CD4-positive, alpha-beta T cell (primary cell): ENCODE measurements at regions of chr3 and their contacts with region 1.

Region 1: GRCh38 chr3:56682462-56683121 is 473 bp downstream of the TASOR start:
- DNase-seq: peak; percentile 65 to 91 (median 74)
- ATAC-seq: peak; percentile 69
- H3K4me3 ChIP-seq: peak overlapping the region; percentile 79
- H3K4me3 Mint-ChIP-seq: peak overlapping the region; percentile 95
- H3K27ac ChIP-seq: peak overlapping the region; percentile 98 to 99
- H3K27ac Mint-ChIP-seq: peak overlapping the region; percentile 99
- H3K4me1 ChIP-seq: peaks cover 20% of the 10 kb centered on the region
- H3K4me1 Mint-ChIP-seq: peaks cover 44% of the 10 kb centered on the region
- H3K27me3 ChIP-seq: no peaks in the 10 kb centered on the region
- H3K27me3 Mint-ChIP-seq: no peaks in the 10 kb centered on the region
- CTCF ChIP-seq: no peak

Region 2: DNA sequence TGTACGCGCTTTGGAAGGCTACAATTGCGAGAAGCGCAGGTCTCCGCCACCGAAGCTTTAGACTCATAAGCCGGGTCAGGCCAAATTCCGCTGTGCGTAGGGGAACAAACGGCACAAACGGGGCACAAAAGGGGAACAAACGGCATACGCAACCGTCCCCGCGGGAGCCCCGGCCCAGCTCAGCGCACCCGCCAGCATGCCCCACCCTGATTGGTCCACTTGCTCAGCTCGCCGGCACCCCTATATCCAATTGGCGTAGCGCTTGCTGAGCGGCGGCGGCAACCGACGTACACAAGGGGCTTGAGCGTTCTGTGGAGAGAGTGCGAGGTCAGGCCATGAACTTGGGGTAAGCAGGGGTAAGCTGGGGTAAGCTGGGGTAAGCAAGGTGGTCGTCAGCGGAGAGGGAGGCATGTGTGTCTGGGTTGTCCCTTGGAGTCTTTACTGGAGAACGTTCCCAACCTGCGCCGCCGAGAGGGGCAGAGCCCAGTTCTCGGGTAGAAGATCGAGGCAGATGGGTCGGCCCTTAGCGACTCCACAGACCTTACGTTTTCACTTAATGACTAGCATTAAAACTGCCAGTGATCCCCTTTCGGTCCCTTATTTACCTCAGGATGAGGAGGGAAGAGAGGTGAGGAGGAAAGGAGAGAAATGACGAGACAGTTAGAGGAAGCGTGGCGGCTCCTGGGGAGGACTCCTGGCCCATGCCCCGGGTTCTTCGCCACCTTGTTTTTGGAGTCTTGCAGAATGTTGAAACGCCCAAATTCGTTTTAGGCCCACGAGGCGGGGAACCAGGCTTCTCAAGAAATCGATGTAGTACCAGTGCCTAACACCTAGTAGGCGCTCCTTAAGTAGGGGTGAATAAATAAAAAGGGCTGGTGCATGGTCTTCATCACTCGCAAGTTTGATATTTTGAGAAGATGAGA is 125.4 kb before region 1 on chr3 and contains the start of gene CCDC66:
- CTCF ChIA-PET with region 1: no interaction called
- POLR2A ChIA-PET with region 1: interaction called, 58 read pairs
- intact Hi-C with region 1: loop called (anchors 1 to 5 kb)
- DNase-seq: peak; percentile 89 to 97 (median 93)
- ATAC-seq: peak; percentile 87
- H3K4me3 ChIP-seq: peak within 1 kb of the TSS; percentile 69
- H3K4me3 Mint-ChIP-seq: peak within 1 kb of the TSS; percentile 99
- H3K27ac ChIP-seq: peak within 1 kb of the TSS; percentile 85 to 94
- H3K27ac Mint-ChIP-seq: peak within 1 kb of the TSS; percentile 97
- H3K4me1 ChIP-seq: peaks cover 6% of the 10 kb centered on the region
- H3K4me1 Mint-ChIP-seq: peaks cover 31% of the 10 kb centered on the region
- H3K27me3 ChIP-seq: no peaks in the 10 kb centered on the region
- H3K27me3 Mint-ChIP-seq: no peaks in the 10 kb centered on the region
- CTCF ChIP-seq: peak; percentile 67
- total RNA-seq, gene CCDC66: 97.1 to 101 TPM

Region 3: DNA sequence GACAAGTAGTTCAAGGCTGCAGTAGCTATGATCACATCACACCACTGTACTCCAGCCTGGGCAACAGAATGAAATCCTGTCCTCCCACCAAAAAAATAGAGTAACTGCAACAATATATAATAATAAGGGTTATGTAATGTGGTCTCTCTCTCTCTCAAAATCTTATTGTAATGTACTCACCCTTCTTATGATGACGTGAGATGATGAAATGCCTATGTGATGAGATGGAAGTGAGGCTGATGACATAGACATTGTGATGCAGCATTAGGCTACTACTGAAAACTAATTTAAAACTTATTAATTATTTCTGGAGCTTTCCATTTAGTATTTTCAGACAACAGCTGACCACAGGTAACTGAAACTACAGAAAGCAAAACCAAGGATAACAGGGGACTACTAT is 26.9 kb before region 1 on chr3:
- CTCF ChIA-PET with region 1: no interaction called
- POLR2A ChIA-PET with region 1: no interaction called
- intact Hi-C with region 1: no loop called
- DNase-seq: no peak
- ATAC-seq: no peak
- H3K4me3 ChIP-seq: no peak overlapping the region
- H3K4me3 Mint-ChIP-seq: no peak overlapping the region
- H3K27ac ChIP-seq: no peak overlapping the region
- H3K27ac Mint-ChIP-seq: peak overlapping the region; percentile 8
- H3K4me1 ChIP-seq: no peaks in the 10 kb centered on the region
- H3K4me1 Mint-ChIP-seq: peaks cover 53% of the 10 kb centered on the region
- H3K27me3 ChIP-seq: no peaks in the 10 kb centered on the region
- H3K27me3 Mint-ChIP-seq: no peaks in the 10 kb centered on the region
- CTCF ChIP-seq: no peak

Region 4: DNA sequence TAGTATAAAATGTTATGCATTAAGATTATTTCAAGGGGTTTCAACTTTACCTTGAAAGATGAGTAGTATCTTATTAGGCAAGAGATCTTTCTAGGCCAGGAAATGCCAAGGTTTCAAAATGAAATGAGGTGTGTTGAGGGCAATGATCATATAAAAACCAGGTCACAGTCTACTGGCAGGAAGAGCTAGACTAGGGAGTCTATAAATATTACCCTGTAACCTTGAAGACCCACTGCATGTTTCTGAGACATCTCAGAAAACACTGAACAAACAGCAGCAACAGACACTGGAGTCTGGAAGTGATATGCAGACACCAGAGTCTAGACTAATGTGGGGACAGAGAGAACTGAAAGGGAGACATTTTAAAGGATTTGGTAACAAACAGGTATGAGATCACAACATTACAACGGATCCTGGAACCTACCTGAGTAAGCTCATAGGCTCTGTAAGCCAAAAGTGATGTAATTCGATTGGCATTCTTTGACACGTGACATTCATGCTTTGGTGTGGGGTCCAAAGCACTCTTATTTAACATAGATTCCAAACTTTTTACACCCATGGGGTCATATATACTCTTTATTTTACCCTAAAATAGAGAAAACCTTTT is 14.5 kb before region 1 on chr3:
- CTCF ChIA-PET with region 1: no interaction called
- POLR2A ChIA-PET with region 1: interaction called, 34 read pairs
- intact Hi-C with region 1: no loop called
- DNase-seq: peak in 2 of 14 experiments; percentile 11 to 35
- ATAC-seq: peak; percentile 65
- H3K4me3 ChIP-seq: no peak overlapping the region
- H3K4me3 Mint-ChIP-seq: no peak overlapping the region
- H3K27ac ChIP-seq: no peak overlapping the region
- H3K27ac Mint-ChIP-seq: peak overlapping the region; percentile 73
- H3K4me1 ChIP-seq: peaks cover 9% of the 10 kb centered on the region
- H3K4me1 Mint-ChIP-seq: peaks cover 37% of the 10 kb centered on the region
- H3K27me3 ChIP-seq: no peaks in the 10 kb centered on the region
- H3K27me3 Mint-ChIP-seq: no peaks in the 10 kb centered on the region
- CTCF ChIP-seq: no peak

Region 5: DNA sequence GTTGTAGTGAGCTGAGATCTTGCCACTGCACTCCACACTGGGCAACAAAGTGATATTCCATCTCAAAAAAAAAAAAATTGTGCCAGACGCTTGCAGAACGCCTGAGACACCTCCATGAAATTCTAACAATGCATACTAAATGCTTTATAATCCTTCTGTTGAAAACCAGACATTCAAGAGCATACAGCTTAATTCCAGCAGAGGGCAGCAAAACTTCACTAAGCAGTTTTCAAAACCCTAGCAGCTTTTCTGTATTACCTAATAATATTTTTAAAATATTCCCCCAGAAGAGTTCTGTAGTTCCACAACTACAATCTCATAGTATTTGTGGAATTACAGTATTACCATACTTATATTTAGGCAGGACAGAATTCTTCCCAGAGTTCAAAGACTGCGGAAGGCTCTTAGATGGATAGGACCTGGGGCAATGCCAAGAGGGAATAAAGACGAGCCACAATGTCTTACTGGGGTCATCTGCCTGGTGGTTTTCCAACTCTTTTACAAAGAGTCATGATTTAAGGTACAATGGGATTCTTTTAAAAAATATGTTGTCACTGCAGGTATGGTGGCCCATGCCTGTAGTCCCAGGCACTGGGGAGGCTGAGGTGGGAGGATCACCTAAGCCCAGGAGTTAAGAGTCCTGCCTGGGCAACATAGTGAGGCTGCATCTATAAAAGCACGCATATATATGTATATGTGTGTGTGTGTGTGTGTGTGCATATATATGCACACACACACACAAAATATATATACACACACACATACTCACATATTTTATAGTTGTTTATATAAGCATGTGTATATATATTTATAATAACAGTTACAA is 20.1 kb after region 1 on chr3:
- CTCF ChIA-PET with region 1: interaction called, 4 read pairs
- POLR2A ChIA-PET with region 1: interaction called, 14 read pairs
- intact Hi-C with region 1: no loop called
- DNase-seq: peak in 11 of 14 experiments; percentile 14 to 86 (median 40)
- ATAC-seq: peak; percentile 77
- H3K4me3 ChIP-seq: no peak overlapping the region
- H3K4me3 Mint-ChIP-seq: no peak overlapping the region
- H3K27ac ChIP-seq: no peak overlapping the region
- H3K27ac Mint-ChIP-seq: no peak overlapping the region
- H3K4me1 ChIP-seq: peaks cover 12% of the 10 kb centered on the region
- H3K4me1 Mint-ChIP-seq: peaks cover 29% of the 10 kb centered on the region
- H3K27me3 ChIP-seq: no peaks in the 10 kb centered on the region
- H3K27me3 Mint-ChIP-seq: no peaks in the 10 kb centered on the region
- CTCF ChIP-seq: peak; percentile 84

Region 6: GRCh38 chr3:56915966-56916586 is 233.5 kb after region 1 on chr3:
- CTCF ChIA-PET with region 1: no interaction called
- POLR2A ChIA-PET with region 1: interaction called, 21 read pairs
- intact Hi-C with region 1: loop called in 1 of 2 experiments (anchors 5 kb)
- DNase-seq: peak; percentile 53 to 86 (median 70)
- ATAC-seq: peak; percentile 94
- H3K4me3 ChIP-seq: peak overlapping the region; percentile 63
- H3K4me3 Mint-ChIP-seq: peak overlapping the region; percentile 92
- H3K27ac ChIP-seq: peak overlapping the region; percentile 69 to 75
- H3K27ac Mint-ChIP-seq: peak overlapping the region; percentile 94
- H3K4me1 ChIP-seq: peaks cover 49% of the 10 kb centered on the region
- H3K4me1 Mint-ChIP-seq: peaks cover 88% of the 10 kb centered on the region
- H3K27me3 ChIP-seq: no peaks in the 10 kb centered on the region
- H3K27me3 Mint-ChIP-seq: no peaks in the 10 kb centered on the region
- CTCF ChIP-seq: no peak

Region 7: DNA sequence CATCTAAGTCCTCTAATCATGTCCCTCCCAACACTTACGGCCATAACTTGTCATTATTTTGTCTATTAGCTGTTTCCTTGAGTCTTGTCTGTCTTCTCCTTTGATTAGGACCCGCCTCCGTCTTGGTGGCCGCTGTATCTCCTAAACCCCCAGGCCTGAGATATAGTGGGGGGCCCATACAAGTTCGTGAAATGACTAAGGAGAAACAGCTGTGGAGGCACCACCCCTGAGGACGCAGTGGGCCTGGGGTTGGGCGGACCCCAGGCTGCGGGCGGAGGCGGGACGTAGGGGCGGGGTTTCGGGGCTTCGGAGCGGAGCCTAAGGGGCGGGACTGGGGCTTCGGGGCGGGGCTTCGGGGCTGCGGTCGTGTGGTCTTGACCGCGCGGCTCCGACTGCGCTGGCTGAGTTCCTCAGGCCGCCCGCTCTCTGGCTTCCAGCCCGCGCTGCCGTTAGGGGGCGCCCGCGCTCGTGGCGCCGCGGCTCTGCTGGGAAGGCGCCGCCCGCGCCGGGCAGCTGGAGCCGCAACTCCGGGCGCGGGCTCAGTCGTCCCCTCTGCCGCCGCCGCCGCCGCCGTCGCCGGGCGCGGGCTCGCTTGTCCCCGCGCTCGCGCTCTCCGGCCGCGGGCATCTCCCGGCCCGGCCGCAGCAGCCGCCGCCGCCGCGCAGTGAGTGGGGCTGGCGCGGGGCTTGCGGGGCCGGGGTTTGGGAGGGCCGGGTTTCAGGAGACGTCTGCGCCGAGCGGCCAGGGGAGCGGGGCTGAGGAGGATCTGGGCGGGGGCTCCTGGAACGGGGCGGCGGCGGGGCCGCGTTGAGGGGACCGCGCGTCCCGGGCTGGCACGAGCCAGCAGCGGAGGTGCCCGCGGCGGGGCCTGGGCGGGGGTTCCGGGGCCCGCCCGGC is 1809.2 kb after region 1 on chr3 and contains the start of gene KCTD6:
- CTCF ChIA-PET with region 1: no interaction called
- POLR2A ChIA-PET with region 1: no interaction called
- intact Hi-C with region 1: loop called in 1 of 2 experiments (anchors 10 kb)
- DNase-seq: peak; percentile 65 to 95 (median 82)
- ATAC-seq: peak; percentile 85
- H3K4me3 ChIP-seq: peak within 1 kb of the TSS; percentile 81
- H3K4me3 Mint-ChIP-seq: peak within 1 kb of the TSS; percentile 97
- H3K27ac ChIP-seq: peak within 1 kb of the TSS; percentile 16 to 30
- H3K27ac Mint-ChIP-seq: peak within 1 kb of the TSS; percentile 83
- H3K4me1 ChIP-seq: peaks cover 22% of the 10 kb centered on the region
- H3K4me1 Mint-ChIP-seq: peaks cover 65% of the 10 kb centered on the region
- H3K27me3 ChIP-seq: no peaks in the 10 kb centered on the region
- H3K27me3 Mint-ChIP-seq: no peaks in the 10 kb centered on the region
- CTCF ChIP-seq: peak; percentile 55
- total RNA-seq, gene KCTD6: 3.8 to 5.0 TPM